ENCODE measurements at regions of chr20 and their contacts with region 1.

Region 1: DNA sequence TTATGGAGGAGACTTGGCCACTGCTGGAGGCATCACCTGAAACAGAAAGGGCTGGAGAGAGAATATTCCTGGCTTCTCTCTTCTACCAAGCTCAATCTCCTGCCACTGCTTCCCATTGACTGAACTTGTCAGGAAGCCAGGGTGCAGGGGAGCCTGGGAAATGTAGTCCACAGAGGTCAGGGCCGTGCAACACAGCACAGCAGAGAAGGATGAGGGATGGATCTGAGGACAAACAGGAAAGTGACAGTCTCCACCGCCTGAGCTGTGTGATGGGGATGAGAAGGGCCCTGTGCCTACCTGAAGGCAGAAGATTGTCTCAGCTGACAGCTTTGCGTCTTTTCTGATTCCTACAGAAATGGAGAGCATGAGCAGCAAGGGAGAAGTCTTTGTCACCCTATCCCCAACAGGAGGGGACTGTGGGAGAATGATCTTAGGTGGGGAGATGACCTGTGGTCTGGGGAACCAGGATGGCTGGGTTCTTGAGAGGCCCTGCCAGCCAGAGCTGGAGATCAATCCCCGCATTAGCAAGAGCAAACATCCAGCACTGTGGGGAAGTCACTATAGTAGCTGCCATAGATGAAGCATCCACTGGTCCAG is 114.2 kb downstream of the SNX5 start:
- DNase-seq: peak; percentile 82
- ATAC-seq: peak; percentile 58
- H3K4me3 ChIP-seq: peak overlapping the region in 2 of 3 experiments; percentile 6 to 38; a peak in 2 of 6 replicates
- H3K27ac ChIP-seq: peak overlapping the region; percentile 21
- H3K4me1 ChIP-seq: peaks cover 76% of the 10 kb centered on the region
- H3K27me3 ChIP-seq: no peaks in the 10 kb centered on the region
- CTCF ChIP-seq: no peak
- EP300 ChIP-seq: 0 out of 4 replicates have a peak, but pooled peaks of 1 of the 2 experiments have one; percentile 21
- POLR2A ChIP-seq: no peak
- RAD21 ChIP-seq: peak; percentile 52

Region 2: DNA sequence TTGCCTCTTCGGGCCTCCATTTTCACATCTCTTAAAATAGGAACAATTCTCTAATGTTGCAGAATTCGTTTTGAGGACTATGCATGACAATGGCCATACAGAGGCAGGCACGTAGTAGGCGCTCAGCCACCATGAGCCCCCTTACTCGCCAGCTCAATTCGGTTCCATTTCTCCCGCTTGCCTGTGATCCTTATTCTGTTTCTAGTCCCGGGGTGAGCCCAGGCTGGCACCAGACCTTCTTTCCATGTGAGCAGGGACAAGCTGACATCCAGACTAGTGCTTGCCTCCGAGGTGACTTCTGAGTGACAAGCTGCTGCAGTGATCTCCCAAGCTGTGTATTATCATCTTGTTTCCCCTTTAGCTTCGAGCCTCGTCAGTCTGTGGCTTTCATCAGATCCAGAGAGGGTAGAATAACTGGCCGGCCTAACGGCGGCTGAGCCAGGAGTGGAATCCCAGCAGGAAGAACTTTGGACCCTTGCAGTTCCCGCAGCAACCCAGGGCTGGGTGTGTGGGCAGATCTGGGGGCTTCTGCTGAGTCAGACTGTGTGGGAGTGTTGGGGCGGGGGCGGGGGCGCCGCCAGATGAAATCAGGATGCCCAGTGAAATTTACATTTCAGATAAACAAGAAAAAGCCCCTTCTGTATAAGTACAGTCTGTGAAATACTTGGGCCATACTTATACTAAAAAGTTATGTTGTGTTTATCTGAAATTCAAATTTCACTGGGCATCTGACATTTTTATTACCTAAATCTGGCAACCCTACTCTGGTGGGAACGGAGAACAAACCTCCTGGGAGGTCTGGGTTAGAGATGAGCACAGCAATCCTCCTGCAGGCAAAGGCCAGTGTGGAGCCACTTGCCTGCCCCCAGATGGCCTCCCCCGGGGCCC is 143.8 kb before region 1 on chr20:
- CTCF ChIA-PET with region 1: no interaction called
- POLR2A ChIA-PET with region 1: interaction called, 46 read pairs
- in situ Hi-C with region 1: no loop called
- intact Hi-C with region 1: no loop called
- DNase-seq: peak; percentile 92
- ATAC-seq: peak; percentile 93
- H3K4me3 ChIP-seq: peak overlapping the region; percentile 36 to 70 (median 54)
- H3K27ac ChIP-seq: peak overlapping the region; percentile 43
- H3K4me1 ChIP-seq: peaks cover 75% of the 10 kb centered on the region
- H3K27me3 ChIP-seq: peaks cover 2 to 23% of the 10 kb centered on the region in 2 experiments; a peak in 2 of 5 replicates
- CTCF ChIP-seq: 0 out of 2 replicates have a peak, but pooled peaks have one; percentile 6
- EP300 ChIP-seq: peak in 1 of 2 experiments; percentile 66; a peak in 2 of 4 replicates
- POLR2A ChIP-seq: peak; percentile 59 to 61; a peak in 3 of 4 replicates
- RAD21 ChIP-seq: peak; percentile 31; the same call in 1 of the 2 replicates

Region 3: DNA sequence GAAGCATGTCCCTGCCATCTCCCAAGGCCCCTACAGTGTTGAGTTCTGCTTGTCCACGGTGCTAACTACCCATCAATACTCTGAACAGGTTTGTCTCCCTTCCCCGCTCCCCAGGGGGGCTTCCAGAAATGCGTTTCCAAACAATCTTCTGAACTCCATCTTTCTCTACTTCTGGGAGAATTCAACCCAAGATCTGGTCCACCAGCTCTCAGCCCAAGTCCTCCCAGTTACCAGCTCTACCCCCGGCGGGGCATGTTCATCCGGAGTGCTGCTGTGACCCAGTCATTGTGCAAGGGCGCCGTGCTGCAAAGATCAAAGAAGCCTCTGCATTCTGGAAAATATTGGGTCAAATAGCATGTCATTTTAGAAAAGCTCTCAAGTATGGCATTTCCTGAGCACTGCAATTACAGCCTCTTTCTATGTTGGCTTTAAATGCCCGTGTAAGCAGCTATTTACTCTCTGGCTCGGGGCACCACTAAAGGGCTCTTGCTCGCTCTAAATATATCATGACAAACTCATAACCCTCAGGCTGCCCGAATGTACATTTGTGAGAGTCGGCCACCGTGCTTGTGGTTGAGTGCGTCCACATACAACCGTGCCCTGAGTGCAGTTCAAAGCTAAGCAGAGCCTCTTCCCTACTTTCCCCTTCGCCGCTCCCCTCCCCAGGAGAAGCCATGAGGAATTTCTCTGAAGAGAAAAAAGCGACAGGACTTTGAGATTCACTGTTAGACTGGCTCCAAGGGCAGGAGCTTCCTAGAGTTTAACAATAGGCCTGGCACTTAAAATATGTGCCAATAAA is 83.0 kb before region 1 on chr20:
- CTCF ChIA-PET with region 1: no interaction called
- POLR2A ChIA-PET with region 1: interaction called, 61 read pairs
- in situ Hi-C with region 1: no loop called
- intact Hi-C with region 1: loop called (anchors 1 kb)
- DNase-seq: peak; percentile 97
- ATAC-seq: peak; percentile 93
- H3K4me3 ChIP-seq: peak overlapping the region; percentile 26 to 59 (median 39)
- H3K27ac ChIP-seq: peak overlapping the region; percentile 79
- H3K4me1 ChIP-seq: peaks cover 39% of the 10 kb centered on the region
- H3K27me3 ChIP-seq: no peaks in the 10 kb centered on the region
- CTCF ChIP-seq: no peak
- EP300 ChIP-seq: peak; percentile 48 to 86; a peak in 1 of 4 replicates
- POLR2A ChIP-seq: peak in 1 of 2 experiments; percentile 52; a peak in 2 of 4 replicates
- RAD21 ChIP-seq: peak; percentile 22; the same call in 1 of the 2 replicates

Region 4: GRCh38 chr20:17835240-17835935 is 19.0 kb before region 1 on chr20:
- CTCF ChIA-PET with region 1: no interaction called
- POLR2A ChIA-PET with region 1: interaction called, 14 read pairs
- in situ Hi-C with region 1: no loop called
- intact Hi-C with region 1: no loop called
- DNase-seq: no peak
- ATAC-seq: peak; percentile 33; the same call in 2 of the 3 replicates
- H3K4me3 ChIP-seq: no peak overlapping the region
- H3K27ac ChIP-seq: no peak overlapping the region
- H3K4me1 ChIP-seq: peaks cover 20% of the 10 kb centered on the region
- H3K27me3 ChIP-seq: peaks cover 0 to 7% of the 10 kb centered on the region in 2 experiments; a peak in 3 of 5 replicates
- CTCF ChIP-seq: no peak
- EP300 ChIP-seq: no peak
- POLR2A ChIP-seq: no peak
- RAD21 ChIP-seq: no peak

Region 5: DNA sequence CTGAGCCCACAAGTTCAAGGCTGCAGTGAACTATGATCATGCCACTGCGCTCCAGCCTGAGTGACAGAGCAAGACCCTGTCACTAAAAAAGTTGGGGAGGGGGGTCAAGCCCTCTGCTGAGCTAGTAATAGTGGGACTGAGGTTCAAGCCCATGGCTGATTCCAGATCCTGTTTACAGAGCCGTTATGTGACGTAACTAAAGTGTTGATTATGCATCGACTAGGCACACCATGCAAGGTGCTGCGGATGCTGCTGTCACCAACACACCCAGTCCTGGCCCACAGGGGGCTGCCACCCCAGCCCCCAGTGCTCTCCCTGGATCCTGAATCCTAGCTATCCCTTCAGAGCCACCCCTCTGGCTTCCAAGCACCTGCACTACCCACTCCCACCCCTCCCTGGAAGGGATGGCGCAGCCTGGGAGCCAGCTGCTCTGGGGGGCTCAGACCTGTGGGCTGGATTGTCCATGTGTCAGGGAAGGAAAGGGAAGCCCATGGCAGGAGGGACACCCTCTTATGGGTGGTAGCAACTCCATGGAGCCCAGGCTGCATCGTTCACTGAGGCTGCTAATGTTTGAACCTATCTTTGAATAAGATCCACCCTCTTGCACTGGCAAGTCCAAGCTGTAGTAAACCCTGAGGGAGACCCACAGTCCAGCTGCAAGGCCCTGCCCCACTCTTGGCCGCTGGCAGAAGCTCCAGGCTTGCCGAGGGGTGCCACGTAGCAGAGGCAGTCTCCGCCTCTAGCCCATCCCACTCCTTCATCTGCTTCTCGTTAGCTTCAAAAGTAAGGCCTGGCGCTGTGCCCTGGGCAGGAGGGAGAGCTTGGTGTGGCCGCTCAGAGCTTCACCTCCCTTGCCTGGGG is 19.2 kb after region 1 on chr20:
- CTCF ChIA-PET with region 1: no interaction called
- POLR2A ChIA-PET with region 1: interaction called, 763 read pairs
- in situ Hi-C with region 1: no loop called
- intact Hi-C with region 1: loop called (anchors 2 kb)
- DNase-seq: peak; percentile 91
- ATAC-seq: peak; percentile 71
- H3K4me3 ChIP-seq: peak overlapping the region in 2 of 3 experiments; percentile 1 to 55; a peak in 3 of 6 replicates
- H3K27ac ChIP-seq: peak overlapping the region; percentile 78
- H3K4me1 ChIP-seq: peaks cover 86% of the 10 kb centered on the region
- H3K27me3 ChIP-seq: no peaks in the 10 kb centered on the region
- CTCF ChIP-seq: peak; percentile 12; the same call in 1 of the 2 replicates
- EP300 ChIP-seq: no peak; a peak in 1 of 4 replicates
- POLR2A ChIP-seq: peak; percentile 73 to 77
- RAD21 ChIP-seq: peak; percentile 11

Region 6: DNA sequence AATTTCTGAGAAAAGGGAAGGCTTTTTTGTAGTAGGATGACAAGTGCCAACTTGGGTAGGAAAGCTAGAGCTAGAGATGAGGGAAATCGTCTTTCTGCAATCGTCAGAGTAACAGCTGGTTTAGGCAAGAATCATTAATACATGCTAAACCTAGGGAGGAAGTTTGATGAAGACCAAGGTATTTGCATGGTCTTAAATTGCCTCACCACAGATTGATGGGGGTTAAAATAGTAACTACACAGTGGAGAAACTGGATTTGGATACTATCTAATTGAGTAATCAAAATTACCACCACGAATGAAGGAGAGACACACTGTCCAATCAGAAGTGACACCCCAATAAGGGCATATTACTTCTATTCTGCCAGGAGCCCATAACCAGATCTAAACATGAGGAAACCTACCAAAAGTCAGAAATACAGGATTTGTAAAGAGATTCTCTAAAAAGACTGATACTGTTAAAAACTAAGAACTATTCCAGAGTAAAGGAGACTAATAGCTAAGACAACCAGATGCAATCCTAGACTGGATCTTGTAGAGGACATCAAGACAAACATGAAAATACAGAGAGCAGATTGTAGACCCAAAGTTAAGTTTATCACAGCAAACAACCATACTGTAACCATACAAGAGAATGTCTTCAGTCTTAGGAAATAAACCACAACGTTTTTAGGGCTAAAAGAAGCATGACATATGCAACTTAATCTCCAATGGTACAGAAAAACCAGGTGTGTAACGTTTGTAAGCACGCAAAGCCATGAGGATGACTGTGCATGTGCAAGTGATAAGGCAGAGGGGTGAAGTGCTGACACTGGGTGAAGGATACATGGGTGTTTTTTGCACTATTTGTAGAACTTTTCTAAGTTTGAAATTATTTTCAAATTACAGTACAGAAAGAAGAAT is 92.4 kb after region 1 on chr20:
- CTCF ChIA-PET with region 1: no interaction called
- POLR2A ChIA-PET with region 1: no interaction called
- in situ Hi-C with region 1: no loop called
- intact Hi-C with region 1: no loop called
- DNase-seq: no peak
- ATAC-seq: no peak
- H3K4me3 ChIP-seq: no peak overlapping the region
- H3K27ac ChIP-seq: no peak overlapping the region
- H3K4me1 ChIP-seq: peaks cover 6% of the 10 kb centered on the region; the same call in 1 of the 2 replicates
- H3K27me3 ChIP-seq: no peaks in the 10 kb centered on the region
- CTCF ChIP-seq: no peak
- EP300 ChIP-seq: no peak
- POLR2A ChIP-seq: peak; percentile 4 to 49; a peak in 1 of 4 replicates
- RAD21 ChIP-seq: no peak

Region 7: GRCh38 chr20:17995967-17996819 is 141.8 kb after region 1 on chr20:
- CTCF ChIA-PET with region 1: no interaction called
- POLR2A ChIA-PET with region 1: no interaction called
- in situ Hi-C with region 1: no loop called
- intact Hi-C with region 1: loop called (anchors 5 kb)
- DNase-seq: peak; percentile 70
- ATAC-seq: peak; percentile 72
- H3K4me3 ChIP-seq: peak overlapping the region in 2 of 3 experiments; percentile 7 to 30; a peak in 2 of 6 replicates
- H3K27ac ChIP-seq: no peak overlapping the region
- H3K4me1 ChIP-seq: peaks cover 28% of the 10 kb centered on the region
- H3K27me3 ChIP-seq: peaks cover 2 to 23% of the 10 kb centered on the region in 2 experiments; a peak in 1 of 5 replicates
- CTCF ChIP-seq: peak; percentile 96
- EP300 ChIP-seq: no peak
- POLR2A ChIP-seq: no peak
- RAD21 ChIP-seq: peak; percentile 91

Region 8: DNA sequence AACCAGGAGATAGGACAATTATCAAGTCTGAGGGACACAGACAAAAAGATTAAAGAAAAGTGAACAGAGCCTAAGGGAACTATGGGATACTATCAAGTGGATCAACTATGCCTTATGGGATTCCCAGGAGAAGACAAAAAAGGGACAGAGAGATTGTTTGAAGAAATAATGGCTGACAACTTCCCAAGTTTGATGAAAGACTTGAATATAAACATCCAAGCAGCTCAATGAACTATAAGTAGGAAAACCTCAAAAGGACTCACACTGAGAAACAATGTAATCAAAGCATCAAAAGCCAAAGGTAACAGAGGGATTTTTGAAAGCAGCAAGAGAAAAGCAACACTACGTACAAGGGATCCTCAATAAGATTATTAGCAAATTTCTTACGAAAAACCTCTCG is 445.0 kb after region 1 on chr20:
- CTCF ChIA-PET with region 1: no interaction called
- POLR2A ChIA-PET with region 1: no interaction called
- in situ Hi-C with region 1: no loop called
- intact Hi-C with region 1: no loop called
- DNase-seq: no peak
- ATAC-seq: no peak
- H3K4me3 ChIP-seq: no peak overlapping the region
- H3K27ac ChIP-seq: no peak overlapping the region
- H3K4me1 ChIP-seq: no peaks in the 10 kb centered on the region
- H3K27me3 ChIP-seq: no peaks in the 10 kb centered on the region
- CTCF ChIP-seq: no peak
- EP300 ChIP-seq: no peak
- POLR2A ChIP-seq: no peak
- RAD21 ChIP-seq: no peak